ENCODE measurements at regions of chr1 and their contacts with region 1.

Region 1: DNA sequence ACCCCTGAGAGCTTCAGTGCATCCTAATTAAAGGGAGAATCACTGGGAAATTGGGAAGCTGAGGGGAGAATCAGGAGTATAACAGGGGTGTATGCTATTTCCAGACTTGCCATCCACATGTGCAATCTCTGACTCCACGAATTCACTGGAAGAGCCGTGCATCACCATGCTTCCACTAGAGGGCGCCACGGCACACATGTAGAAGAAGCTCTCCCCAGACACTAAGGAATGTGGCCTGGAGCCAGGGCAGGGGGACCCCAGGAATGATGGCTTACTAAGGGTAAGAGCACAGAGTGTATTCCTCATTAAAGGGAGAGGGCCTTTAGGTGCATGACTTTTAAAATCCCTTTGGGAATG is 81.5 kb downstream of the ABCA4 start:
- DNase-seq: peak; percentile 61 to 81 (median 70)
- H3K4me3 ChIP-seq: no peak overlapping the region
- H3K27ac ChIP-seq: no peak overlapping the region
- H3K4me1 ChIP-seq: peaks cover 0 to 5% (median 5%) of the 10 kb centered on the region in 4 experiments
- H3K27me3 ChIP-seq: peaks cover 0 to 17% (median 16%) of the 10 kb centered on the region in 5 experiments

Region 2: GRCh38 chr1:93955765-93956164 is 83.7 kb before region 1 on chr1:
- CTCF ChIA-PET with region 1: no interaction called
- POLR2A ChIA-PET with region 1: no interaction called
- DNase-seq: no peak
- H3K4me3 ChIP-seq: no peak overlapping the region
- H3K27ac ChIP-seq: no peak overlapping the region
- H3K4me1 ChIP-seq: peaks cover 0 to 4% (median 1%) of the 10 kb centered on the region in 4 experiments
- H3K27me3 ChIP-seq: no peaks in the 10 kb centered on the region

Region 3: GRCh38 chr1:94160811-94161210 is 121.3 kb after region 1 on chr1:
- CTCF ChIA-PET with region 1: no interaction called
- POLR2A ChIA-PET with region 1: no interaction called
- DNase-seq: no peak
- H3K4me3 ChIP-seq: no peak overlapping the region
- H3K27ac ChIP-seq: no peak overlapping the region
- H3K4me1 ChIP-seq: no peaks in the 10 kb centered on the region
- H3K27me3 ChIP-seq: no peaks in the 10 kb centered on the region

Region 4: DNA sequence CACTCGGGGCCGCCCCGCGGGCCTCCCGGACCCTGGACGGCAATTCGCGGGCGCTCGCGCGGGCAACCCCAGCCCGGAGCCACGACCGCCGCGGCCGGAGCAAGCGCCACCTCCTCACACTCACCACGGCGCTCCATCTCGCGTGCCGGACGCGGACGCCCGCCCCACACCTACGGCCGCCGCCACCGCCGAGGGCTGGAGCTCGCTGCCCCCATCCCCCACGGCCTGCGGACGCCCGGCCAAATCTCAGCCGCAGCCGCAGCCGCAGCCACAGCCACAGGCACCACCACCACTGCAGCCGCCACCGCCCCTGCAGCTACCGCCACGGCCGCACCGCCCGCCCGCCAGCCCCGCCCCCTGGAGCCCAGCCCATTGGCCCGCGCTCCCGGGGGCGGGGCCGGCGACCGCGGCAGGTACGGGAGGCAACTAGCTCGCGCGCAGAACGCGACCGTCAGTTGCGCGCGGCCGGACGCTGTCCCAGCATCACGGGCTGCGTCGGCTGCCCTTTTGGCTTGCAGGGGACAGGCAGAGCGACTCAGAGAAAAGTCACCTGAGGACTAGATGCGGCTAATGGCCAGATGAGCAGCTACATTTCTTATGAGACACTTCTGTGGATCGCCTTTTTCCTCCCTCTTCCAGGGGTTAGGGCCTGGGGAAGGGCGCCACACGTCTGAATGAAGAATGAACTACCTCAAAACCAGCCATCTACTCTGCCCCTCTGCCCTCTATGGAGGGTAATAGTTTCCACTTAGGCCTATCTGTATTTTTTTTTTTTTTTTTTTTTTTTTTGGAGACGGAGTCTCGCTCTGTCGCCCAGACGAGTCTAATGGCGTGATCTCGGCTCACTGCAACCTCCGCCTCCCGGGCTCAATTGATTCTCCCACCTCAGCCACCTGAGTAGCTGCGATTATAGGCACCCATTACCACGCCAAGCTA is 198.1 kb after region 1 on chr1 and contains the start of gene ARHGAP29:
- CTCF ChIA-PET with region 1: interaction called, 16 read pairs
- POLR2A ChIA-PET with region 1: no interaction called
- DNase-seq: peak; percentile 54 to 76 (median 66)
- H3K4me3 ChIP-seq: peak within 1 kb of the TSS; percentile 4 to 72 (median 57)
- H3K27ac ChIP-seq: no peak within 1 kb of the TSS
- H3K4me1 ChIP-seq: peaks cover 9 to 20% (median 14%) of the 10 kb centered on the region in 4 experiments
- H3K27me3 ChIP-seq: peaks cover 13 to 77% (median 39%) of the 10 kb centered on the region in 5 experiments

Region 5: DNA sequence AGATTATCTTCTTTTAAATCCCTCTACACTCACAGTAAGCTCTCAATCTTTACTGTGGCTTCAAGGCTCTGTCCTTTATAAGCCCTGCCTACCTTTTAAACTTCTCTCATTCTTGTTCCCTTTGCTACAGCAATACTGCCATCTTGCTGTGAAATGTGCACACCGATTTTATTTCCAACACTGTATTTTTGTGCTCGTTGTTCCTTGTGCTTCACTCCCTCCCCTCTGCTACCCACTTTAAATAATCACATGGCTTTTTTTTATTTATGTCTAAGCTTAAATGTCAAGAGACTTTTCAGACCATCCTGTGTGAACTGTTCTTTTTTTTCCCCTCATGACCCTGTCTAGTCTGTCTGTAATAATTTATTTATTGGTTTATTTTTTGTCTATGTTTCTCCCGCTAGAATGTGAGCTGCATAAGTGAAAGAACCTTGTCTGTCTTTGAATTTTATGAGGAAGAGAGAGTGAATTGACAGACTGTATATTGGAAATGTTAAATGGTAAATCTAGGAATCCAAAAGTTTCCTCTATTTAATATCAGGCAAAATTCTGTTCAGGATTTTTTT is 424.4 kb after region 1 on chr1:
- CTCF ChIA-PET with region 1: interaction called, 11 read pairs
- POLR2A ChIA-PET with region 1: no interaction called
- DNase-seq: peak; percentile 62 to 82 (median 78)
- H3K4me3 ChIP-seq: no peak overlapping the region
- H3K27ac ChIP-seq: no peak overlapping the region
- H3K4me1 ChIP-seq: peaks cover 0 to 13% (median under 1%) of the 10 kb centered on the region in 4 experiments
- H3K27me3 ChIP-seq: no peaks in the 10 kb centered on the region

Measured in common myeloid progenitor, CD34-positive (primary cell).